Mammary epithelial cell (primary cell): ENCODE measurements at regions of chr4 and their contacts with region 1.

Region 1: GRCh38 chr4:1346781-1347409 is at the start of gene UVSSA:
- DNase-seq: peak; percentile 100
- H3K4me3 ChIP-seq: peak within 1 kb of the TSS; percentile 80 to 89 (median 87)
- H3K27ac ChIP-seq: peak within 1 kb of the TSS; percentile 89
- H3K4me1 ChIP-seq: peaks cover 25% of the 10 kb centered on the region
- H3K27me3 ChIP-seq: no peaks in the 10 kb centered on the region
- CTCF ChIP-seq: no peak
- total RNA-seq, gene UVSSA: 11.8 to 33.2 TPM

Region 2: GRCh38 chr4:1167247-1167949 is 179.5 kb before region 1 on chr4:
- CTCF ChIA-PET with region 1: no interaction called
- dilution Hi-C with region 1: no loop called
- in situ Hi-C with region 1: no loop called
- intact Hi-C with region 1: loop called (anchors 1 kb)
- DNase-seq: peak; percentile 31
- H3K4me3 ChIP-seq: peak overlapping the region in 1 of 3 experiments; percentile 43
- H3K27ac ChIP-seq: no peak overlapping the region
- H3K4me1 ChIP-seq: peaks cover 4% of the 10 kb centered on the region
- H3K27me3 ChIP-seq: peaks cover 22% of the 10 kb centered on the region
- CTCF ChIP-seq: peak; percentile 67 to 92

Region 3: GRCh38 chr4:1255151-1255550 is 91.7 kb before region 1 on chr4:
- CTCF ChIA-PET with region 1: no interaction called
- dilution Hi-C with region 1: no loop called
- in situ Hi-C with region 1: no loop called
- intact Hi-C with region 1: no loop called
- DNase-seq: peak; percentile 62
- H3K4me3 ChIP-seq: no peak overlapping the region
- H3K27ac ChIP-seq: no peak overlapping the region
- H3K4me1 ChIP-seq: peaks cover 3% of the 10 kb centered on the region
- H3K27me3 ChIP-seq: no peaks in the 10 kb centered on the region
- CTCF ChIP-seq: no peak

Region 4: DNA sequence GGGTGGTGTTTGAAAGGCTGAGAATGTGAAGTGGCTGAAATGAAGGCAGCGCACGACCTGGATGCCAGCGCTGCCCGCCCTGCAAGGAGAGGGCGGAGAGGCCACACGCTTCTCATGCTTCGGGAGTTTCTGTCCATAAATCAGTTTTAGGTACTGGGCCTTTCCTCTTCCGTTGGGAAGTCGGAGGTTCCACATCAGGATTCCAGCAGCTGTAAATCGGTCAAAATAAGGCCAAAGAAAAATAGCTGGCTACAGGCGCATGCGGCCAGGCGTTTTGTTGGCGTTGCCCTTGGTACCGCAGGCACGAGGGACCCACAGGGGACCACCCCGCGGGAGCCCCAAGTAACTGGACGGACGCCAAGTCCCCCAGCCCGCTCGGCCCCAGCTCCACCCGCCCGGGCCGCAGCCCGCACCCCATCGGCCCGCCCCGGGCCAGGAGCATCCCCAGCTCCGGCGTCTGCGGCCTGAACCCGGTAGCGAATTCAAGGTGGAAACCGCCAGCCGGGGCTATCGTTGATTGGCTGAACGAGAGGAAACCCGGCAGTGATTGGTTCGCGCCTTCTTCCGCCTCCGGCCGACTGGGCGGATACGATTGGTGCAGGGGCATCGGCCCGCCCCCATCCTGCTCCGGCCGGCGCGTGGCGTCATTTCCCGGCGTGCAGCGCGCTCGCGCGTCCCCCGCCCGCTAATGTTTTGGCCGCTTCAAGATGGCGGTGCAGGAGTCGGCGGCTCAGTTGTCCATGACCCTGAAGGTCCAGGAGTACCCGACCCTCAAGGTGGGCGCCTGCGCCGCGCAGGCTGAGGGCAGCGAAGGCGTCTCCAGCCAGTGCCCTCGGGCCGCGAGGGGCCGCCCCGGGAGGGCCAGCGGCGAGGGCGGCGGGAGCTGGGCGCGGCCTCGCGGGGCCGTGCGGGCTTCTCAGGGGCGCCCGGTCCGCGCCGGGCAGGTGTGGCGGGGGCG is 57.4 kb before region 1 on chr4 and contains the start of gene MAEA:
- CTCF ChIA-PET with region 1: interaction called, 3 read pairs
- dilution Hi-C with region 1: no loop called
- in situ Hi-C with region 1: loop called in 1 of 2 experiments (anchors 10 kb)
- intact Hi-C with region 1: loop called (anchors 1 kb)
- DNase-seq: peak; percentile 96
- H3K4me3 ChIP-seq: peak within 1 kb of the TSS; percentile 77 to 94 (median 79)
- H3K27ac ChIP-seq: peak within 1 kb of the TSS; percentile 80
- H3K4me1 ChIP-seq: peaks cover 26% of the 10 kb centered on the region
- H3K27me3 ChIP-seq: no peaks in the 10 kb centered on the region
- CTCF ChIP-seq: no peak
- total RNA-seq, gene MAEA: 80.4 to 109 TPM

Region 5: DNA sequence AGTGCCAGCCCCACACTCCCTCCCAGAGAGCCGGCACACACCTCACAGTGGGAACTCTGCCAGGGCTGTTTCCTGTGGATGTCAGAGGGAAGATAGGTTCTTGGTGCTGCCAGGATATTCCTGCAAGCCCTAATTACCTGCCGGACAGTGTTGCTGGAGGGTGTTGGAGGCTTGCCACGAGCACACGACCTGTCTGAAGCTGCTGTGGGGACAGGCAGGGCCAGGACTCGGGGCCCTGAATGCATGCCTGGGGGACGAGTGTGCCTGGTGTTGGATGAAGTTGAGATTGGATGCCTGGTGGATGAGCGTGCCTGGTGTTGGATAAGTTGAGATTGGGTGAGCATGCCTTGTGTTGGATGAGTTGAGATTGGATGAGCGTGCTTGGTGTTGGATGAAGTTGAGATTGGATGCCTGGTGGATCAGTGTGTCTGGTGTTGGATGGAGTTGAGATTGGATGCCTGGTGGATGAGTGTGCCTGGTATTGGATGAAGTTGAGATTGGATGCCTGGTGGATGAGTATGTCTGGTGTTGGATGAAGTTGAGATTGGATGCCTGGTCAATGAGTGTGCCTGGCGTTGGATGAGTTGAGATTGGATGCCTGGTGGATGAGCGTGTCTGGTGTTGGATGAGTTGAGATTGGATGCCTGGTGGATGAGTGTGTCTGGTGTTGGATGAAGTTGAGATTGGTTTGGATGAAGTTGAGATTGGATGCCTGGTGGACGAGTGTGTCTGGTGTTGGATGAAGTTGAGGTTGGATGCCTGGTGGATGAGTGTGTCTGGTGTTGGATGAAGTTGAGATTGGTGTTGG is 23.1 kb before region 1 on chr4:
- CTCF ChIA-PET with region 1: no interaction called
- dilution Hi-C with region 1: no loop called
- in situ Hi-C with region 1: no loop called
- intact Hi-C with region 1: loop called (anchors 1 kb)
- DNase-seq: peak; percentile 98
- H3K4me3 ChIP-seq: no peak overlapping the region
- H3K27ac ChIP-seq: peak overlapping the region; percentile 46
- H3K4me1 ChIP-seq: peaks cover 45% of the 10 kb centered on the region
- H3K27me3 ChIP-seq: no peaks in the 10 kb centered on the region
- CTCF ChIP-seq: no peak

Region 6: GRCh38 chr4:1384675-1385372 is 37.9 kb after region 1 on chr4:
- CTCF ChIA-PET with region 1: no interaction called
- dilution Hi-C with region 1: loop called (anchors 5 kb)
- in situ Hi-C with region 1: no loop called
- intact Hi-C with region 1: no loop called
- DNase-seq: no peak
- H3K4me3 ChIP-seq: no peak overlapping the region
- H3K27ac ChIP-seq: no peak overlapping the region
- H3K4me1 ChIP-seq: no peaks in the 10 kb centered on the region
- H3K27me3 ChIP-seq: no peaks in the 10 kb centered on the region
- CTCF ChIP-seq: no peak